Prostate gland (tissue), 2 donors: ENCODE measurements at regions of chr15 and their contacts with region 1.

Region 1: GRCh38 chr15:92565351-92566125 is 90.0 kb downstream of the FAM174B start:
- DNase-seq: no peak
- H3K4me3 ChIP-seq: no peak overlapping the region
- H3K27ac ChIP-seq: no peak overlapping the region
- H3K4me1 ChIP-seq: no peaks in the 10 kb centered on the region
- H3K27me3 ChIP-seq: no peaks in the 10 kb centered on the region
- CTCF ChIP-seq: no peak
- POLR2A ChIP-seq: no peak

Region 2: DNA sequence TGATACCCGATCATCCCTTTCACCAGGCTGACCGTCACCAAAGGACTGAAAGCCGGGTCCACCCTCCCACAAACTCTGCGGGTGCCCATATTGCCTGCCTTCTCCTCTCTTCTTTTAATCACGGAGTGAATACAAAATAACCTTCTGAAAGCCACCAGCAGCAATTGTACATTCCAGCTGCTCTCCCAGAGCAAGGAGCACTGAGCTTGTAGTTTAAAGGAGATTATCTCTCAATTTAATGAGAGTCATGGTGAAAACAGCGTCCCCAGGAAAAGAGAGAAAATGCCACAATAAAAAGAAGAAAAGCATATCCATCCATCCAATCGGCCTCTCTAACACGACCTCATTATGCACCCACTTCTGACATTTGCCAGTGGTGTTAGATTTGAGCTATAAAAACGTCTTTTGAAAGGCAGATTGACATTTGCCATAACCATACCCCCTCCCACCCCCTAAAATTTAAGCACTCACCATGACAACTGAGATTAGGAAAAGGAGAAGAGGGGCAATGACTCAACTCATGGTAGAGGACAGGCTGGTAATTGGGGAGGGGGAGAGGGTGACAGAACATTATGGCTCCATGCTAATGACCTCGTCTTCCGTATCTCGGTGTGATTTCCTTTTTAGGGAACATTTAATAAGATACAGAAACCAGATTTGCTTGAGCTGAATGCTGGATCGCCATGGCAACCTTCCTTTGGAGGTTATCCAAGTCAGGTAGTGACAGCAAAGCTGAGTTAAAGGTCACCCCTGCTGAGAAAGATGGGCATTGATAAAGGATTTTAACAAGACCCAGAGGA is 65.6 kb before region 1 on chr15:
- intact Hi-C with region 1: loop called (anchors 10 kb)
- DNase-seq: no peak
- H3K4me3 ChIP-seq: no peak overlapping the region
- H3K27ac ChIP-seq: no peak overlapping the region
- H3K4me1 ChIP-seq: no peaks in the 10 kb centered on the region
- H3K27me3 ChIP-seq: no peaks in the 10 kb centered on the region
- CTCF ChIP-seq: no peak
- POLR2A ChIP-seq: no peak

Region 3: DNA sequence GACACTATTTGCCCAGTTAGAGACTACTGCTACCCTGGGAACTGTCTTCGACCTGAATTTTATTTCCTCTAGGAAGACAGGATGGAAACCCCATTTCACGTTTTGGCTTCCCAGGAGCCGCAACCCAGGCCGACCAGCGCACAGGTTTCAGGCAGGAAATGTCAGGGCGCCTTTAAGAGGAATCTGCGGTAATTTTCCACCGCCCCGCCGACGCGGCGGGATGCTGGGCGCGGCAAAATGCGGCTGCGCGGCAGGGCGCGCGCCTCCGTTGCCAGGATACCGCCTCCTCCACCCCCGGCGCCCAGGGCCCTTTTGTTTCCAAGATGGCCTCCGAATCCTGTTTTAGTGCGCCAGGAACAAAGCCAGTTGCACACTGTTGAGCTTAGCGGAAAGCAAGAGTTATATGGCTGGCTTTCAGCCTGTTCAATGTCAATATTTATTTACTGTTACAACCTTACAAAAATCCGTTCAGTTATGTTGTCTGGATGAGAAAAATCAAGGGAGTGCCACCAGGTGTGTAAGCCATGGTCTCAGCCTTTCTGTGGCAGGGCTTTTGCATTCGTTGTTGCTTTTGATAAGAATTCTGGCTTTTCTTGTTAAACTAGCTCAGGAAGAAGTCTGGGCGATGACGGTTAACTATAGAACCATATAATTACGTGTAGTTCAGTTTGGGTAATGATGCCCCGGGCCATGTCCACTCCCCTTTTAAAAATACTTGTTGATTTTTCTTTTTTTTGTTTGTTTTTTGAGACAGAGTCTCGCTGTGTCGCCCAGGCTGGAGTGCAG is 254.9 kb after region 1 on chr15:
- intact Hi-C with region 1: no loop called
- DNase-seq: peak; percentile 94
- H3K4me3 ChIP-seq: peak overlapping the region; percentile 15 to 25
- H3K27ac ChIP-seq: peak overlapping the region; percentile 93 to 96
- H3K4me1 ChIP-seq: peaks cover 10% of the 10 kb centered on the region
- H3K27me3 ChIP-seq: no peaks in the 10 kb centered on the region
- CTCF ChIP-seq: no peak
- POLR2A ChIP-seq: peak; percentile 78